ENCODE measurements at regions of chr3 and their contacts with region 1.

Region 1: GRCh38 chr3:101913173-101913572 is 63.9 kb downstream of the NFKBIZ start:
- DNase-seq: no peak
- ATAC-seq: no peak
- H3K4me3 ChIP-seq: no peak overlapping the region
- H3K4me3 Mint-ChIP-seq: no peak overlapping the region
- H3K27ac ChIP-seq: no peak overlapping the region
- H3K27ac Mint-ChIP-seq: no peak overlapping the region
- H3K4me1 ChIP-seq: no peaks in the 10 kb centered on the region
- H3K4me1 Mint-ChIP-seq: peaks cover 0 to 5% (median 0%) of the 10 kb centered on the region in 7 donors
- H3K27me3 ChIP-seq: no peaks in the 10 kb centered on the region
- H3K27me3 Mint-ChIP-seq: peaks cover 0 to 29% (median 0%) of the 10 kb centered on the region in 5 donors

Region 2: GRCh38 chr3:101876142-101876541 is 37.0 kb before region 1 on chr3:
- CTCF ChIA-PET with region 1: no interaction called
- POLR2A ChIA-PET with region 1: no interaction called
- intact Hi-C with region 1: loop called in 1 of 2 experiments (anchors 5 kb)
- DNase-seq: no peak
- ATAC-seq: peak; percentile 51
- H3K4me3 ChIP-seq: no peak overlapping the region
- H3K4me3 Mint-ChIP-seq: no peak overlapping the region
- H3K27ac ChIP-seq: no peak overlapping the region
- H3K27ac Mint-ChIP-seq: no peak overlapping the region
- H3K4me1 ChIP-seq: no peaks in the 10 kb centered on the region
- H3K4me1 Mint-ChIP-seq: peaks cover 0 to 10% (median 0%) of the 10 kb centered on the region in 7 donors
- H3K27me3 ChIP-seq: no peaks in the 10 kb centered on the region
- H3K27me3 Mint-ChIP-seq: peaks cover 0 to 2% (median 0%) of the 10 kb centered on the region in 5 donors

Region 3: GRCh38 chr3:101928890-101929289 is 15.7 kb after region 1 on chr3:
- CTCF ChIA-PET with region 1: no interaction called
- POLR2A ChIA-PET with region 1: no interaction called
- intact Hi-C with region 1: loop called in 1 of 2 experiments (anchors 1 kb)
- DNase-seq: no peak
- ATAC-seq: no peak
- H3K4me3 ChIP-seq: no peak overlapping the region
- H3K4me3 Mint-ChIP-seq: no peak overlapping the region
- H3K27ac ChIP-seq: no peak overlapping the region
- H3K27ac Mint-ChIP-seq: peak overlapping the region in 1 of 9 donors; percentile 73
- H3K4me1 ChIP-seq: peaks cover 0 to 17% of the 10 kb centered on the region in 2 donors
- H3K4me1 Mint-ChIP-seq: peaks cover 10 to 36% (median 33%) of the 10 kb centered on the region in 7 donors
- H3K27me3 ChIP-seq: no peaks in the 10 kb centered on the region
- H3K27me3 Mint-ChIP-seq: peaks cover 0 to 14% (median 0%) of the 10 kb centered on the region in 5 donors